Common myeloid progenitor, CD34-positive (primary cell): ENCODE measurements at regions of chr1 and their contacts with region 1.

Region 1: DNA sequence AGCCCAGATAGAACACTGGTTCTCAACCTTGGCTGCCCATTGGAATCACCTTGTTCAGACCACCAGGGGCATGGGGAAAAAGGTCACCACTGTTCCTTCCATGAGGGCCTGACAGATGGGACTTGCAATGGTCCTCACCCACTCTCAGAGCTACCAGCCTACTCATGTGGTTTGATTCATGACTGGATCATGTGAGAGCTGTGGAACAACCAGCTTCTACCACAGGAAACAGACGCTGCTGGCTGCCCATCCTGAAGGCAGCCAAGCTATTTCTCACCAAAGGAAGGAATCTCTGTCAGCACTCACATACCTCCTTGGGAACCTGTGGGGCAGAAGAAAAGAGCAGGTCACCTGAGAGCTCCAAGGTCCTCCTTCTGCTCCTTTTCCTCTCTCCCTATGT is 53.6 kb downstream of the CAPN8 start:
- DNase-seq: peak; percentile 87 to 95 (median 91)
- H3K4me3 ChIP-seq: no peak overlapping the region
- H3K27ac ChIP-seq: no peak overlapping the region
- H3K4me1 ChIP-seq: peaks cover 0 to 12% (median 8%) of the 10 kb centered on the region in 4 experiments
- H3K27me3 ChIP-seq: no peaks in the 10 kb centered on the region

Region 2: GRCh38 chr1:223455470-223455869 is 156.5 kb before region 1 on chr1:
- CTCF ChIA-PET with region 1: no interaction called
- POLR2A ChIA-PET with region 1: no interaction called
- DNase-seq: no peak
- H3K4me3 ChIP-seq: no peak overlapping the region
- H3K27ac ChIP-seq: no peak overlapping the region
- H3K4me1 ChIP-seq: no peaks in the 10 kb centered on the region
- H3K27me3 ChIP-seq: no peaks in the 10 kb centered on the region

Region 3: GRCh38 chr1:223549740-223550139 is 62.2 kb before region 1 on chr1:
- CTCF ChIA-PET with region 1: interaction called, 35 read pairs
- POLR2A ChIA-PET with region 1: no interaction called
- DNase-seq: no peak
- H3K4me3 ChIP-seq: no peak overlapping the region
- H3K27ac ChIP-seq: no peak overlapping the region
- H3K4me1 ChIP-seq: peaks cover 0 to 6% (median 5%) of the 10 kb centered on the region in 4 experiments
- H3K27me3 ChIP-seq: no peaks in the 10 kb centered on the region

Region 4: GRCh38 chr1:223556414-223557129 is 55.4 kb before region 1 on chr1:
- CTCF ChIA-PET with region 1: interaction called, 65 read pairs
- POLR2A ChIA-PET with region 1: no interaction called
- DNase-seq: peak; percentile 54 to 74 (median 65)
- H3K4me3 ChIP-seq: no peak overlapping the region
- H3K27ac ChIP-seq: no peak overlapping the region
- H3K4me1 ChIP-seq: no peaks in the 10 kb centered on the region
- H3K27me3 ChIP-seq: no peaks in the 10 kb centered on the region

Region 5: GRCh38 chr1:223628233-223629125 is 16.5 kb after region 1 on chr1:
- CTCF ChIA-PET with region 1: interaction called, 26 read pairs
- POLR2A ChIA-PET with region 1: interaction called, 3 read pairs
- DNase-seq: peak; percentile 31 to 51 (median 50)
- H3K4me3 ChIP-seq: no peak overlapping the region
- H3K27ac ChIP-seq: no peak overlapping the region
- H3K4me1 ChIP-seq: no peaks in the 10 kb centered on the region
- H3K27me3 ChIP-seq: peaks cover 0 to 4% (median 0%) of the 10 kb centered on the region in 5 experiments

Region 6: GRCh38 chr1:223887747-223888418 is 275.9 kb after region 1 on chr1:
- CTCF ChIA-PET with region 1: no interaction called
- POLR2A ChIA-PET with region 1: no interaction called
- DNase-seq: no peak
- H3K4me3 ChIP-seq: no peak overlapping the region
- H3K27ac ChIP-seq: no peak overlapping the region
- H3K4me1 ChIP-seq: no peaks in the 10 kb centered on the region
- H3K27me3 ChIP-seq: no peaks in the 10 kb centered on the region